H1 (cell line): ENCODE measurements at regions of chr13 and their contacts with region 1.

Region 1: DNA sequence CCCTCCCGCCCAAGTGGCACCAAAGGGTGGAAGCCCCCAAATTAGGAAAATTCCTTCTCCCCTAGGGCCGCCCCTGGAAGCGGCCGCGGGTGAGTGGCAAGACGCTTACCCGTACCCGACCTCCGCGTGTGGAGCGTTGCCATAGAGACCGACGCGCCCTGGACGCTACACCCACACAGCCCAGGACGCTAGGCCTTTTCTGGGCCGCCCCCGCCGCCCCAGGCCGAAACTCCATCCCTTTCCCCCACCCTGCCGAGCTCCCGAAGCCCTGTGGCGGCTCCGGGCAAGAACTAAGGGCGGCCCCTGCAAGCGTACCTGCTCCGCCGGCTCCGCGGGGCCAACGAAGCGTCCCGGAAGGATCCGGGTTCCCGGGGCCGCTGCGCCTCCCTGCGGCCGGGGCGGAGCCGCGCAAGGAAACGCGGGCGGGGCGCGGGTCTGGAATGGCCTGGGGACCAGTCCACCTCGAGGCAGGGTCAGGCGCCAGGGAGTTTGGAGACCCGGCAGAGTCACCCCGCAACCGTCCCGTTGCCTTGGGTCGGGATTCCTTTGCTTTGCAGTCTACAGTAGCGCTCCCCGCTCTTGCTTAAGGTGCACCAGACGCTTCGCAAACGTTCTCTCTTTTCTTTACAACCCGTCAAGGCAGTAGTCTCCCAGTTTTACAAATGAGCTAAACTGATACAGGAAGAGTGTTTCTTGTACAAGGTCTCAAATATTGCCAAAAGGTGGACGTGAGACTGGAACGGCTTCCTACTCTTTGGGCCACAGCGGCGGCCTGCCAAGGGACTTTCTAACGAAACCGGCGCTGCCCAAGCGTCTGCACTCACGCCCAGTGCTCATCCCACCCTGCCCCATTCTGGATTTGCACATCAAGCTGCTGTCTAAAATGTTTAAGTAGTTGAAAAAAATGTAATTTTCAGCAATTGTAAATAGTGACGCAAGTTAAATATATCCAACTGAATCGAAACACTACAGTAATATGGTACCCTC is at the start of gene NEK5:
- DNase-seq: peak; percentile 46 to 93
- H3K4me3 ChIP-seq: peak within 1 kb of the TSS; percentile 46 to 78 (median 70)
- H3K27ac ChIP-seq: no peak within 1 kb of the TSS
- H3K4me1 ChIP-seq: no peaks in the 10 kb centered on the region
- H3K27me3 ChIP-seq: peaks cover 0 to 10% (median 2%) of the 10 kb centered on the region in 4 experiments; a peak in 2 of 7 replicates
- CTCF ChIP-seq: peak; percentile 62 to 86 (median 76)
- EP300 ChIP-seq: no peak
- POLR2A ChIP-seq: no peak
- RAD21 ChIP-seq: peak; percentile 81 to 87
- total RNA-seq, gene NEK5: 0.27 and 0.35 TPM in 2 replicates

Region 2: DNA sequence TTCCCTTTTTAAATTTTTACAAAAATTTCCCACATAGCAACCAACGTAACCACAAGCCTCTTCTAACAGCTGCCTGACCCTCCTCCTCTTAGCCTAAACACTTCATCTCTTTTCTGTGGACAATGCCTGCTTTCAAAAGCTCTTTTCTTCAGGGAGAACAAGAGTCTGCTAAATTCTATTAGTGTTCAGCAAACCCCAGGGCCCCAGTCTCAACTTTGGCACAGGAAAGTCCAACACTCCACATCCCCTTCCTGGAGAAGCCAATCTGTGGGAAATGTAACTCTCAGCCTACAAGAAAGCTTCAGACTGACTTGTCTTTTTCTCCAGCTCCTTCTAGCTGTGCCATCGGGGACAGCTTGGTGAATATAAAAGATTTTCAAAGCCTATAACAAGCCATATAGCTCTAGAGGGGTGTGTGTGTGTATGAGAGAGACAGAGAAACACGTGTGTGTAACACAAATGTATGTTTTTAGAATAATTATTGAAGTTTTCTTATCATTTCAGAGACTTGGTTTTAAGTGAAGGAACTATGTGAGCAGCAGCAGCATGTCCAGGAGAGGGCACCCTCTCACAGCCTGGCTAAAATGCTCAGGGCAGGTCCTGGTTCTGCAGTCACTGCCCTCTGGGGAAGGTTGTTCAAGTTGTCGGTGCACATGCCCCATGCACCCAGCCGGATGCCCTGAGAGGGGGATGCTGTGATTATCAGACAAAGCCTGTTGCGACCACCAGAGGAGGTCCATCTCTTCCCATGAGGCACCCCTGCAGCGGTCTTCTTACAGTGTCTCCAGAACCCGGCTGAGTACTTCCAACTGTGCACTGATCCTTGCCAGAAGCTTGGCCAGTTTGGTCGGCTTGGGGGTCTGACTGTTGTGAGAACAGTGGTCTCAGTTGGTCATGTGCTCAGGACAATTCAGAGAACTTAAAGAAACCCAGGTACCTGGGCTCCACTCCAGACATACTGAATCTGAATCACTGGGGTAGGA is 232.8 kb before region 1 on chr13:
- CTCF ChIA-PET with region 1: interaction called, 78 read pairs
- POLR2A ChIA-PET with region 1: interaction called, 3 read pairs
- DNase-seq: peak; percentile 51 to 69
- H3K4me3 ChIP-seq: no peak overlapping the region
- H3K27ac ChIP-seq: no peak overlapping the region
- H3K4me1 ChIP-seq: 0 out of 7 replicates have a peak, but pooled peaks cover 0 to 4% (median 0%) of the 10 kb centered on the region in 4 experiments
- H3K27me3 ChIP-seq: no peaks in the 10 kb centered on the region
- CTCF ChIP-seq: peak; percentile 86 to 93 (median 88)
- EP300 ChIP-seq: no peak
- POLR2A ChIP-seq: no peak
- RAD21 ChIP-seq: peak; percentile 88 to 92

Region 3: DNA sequence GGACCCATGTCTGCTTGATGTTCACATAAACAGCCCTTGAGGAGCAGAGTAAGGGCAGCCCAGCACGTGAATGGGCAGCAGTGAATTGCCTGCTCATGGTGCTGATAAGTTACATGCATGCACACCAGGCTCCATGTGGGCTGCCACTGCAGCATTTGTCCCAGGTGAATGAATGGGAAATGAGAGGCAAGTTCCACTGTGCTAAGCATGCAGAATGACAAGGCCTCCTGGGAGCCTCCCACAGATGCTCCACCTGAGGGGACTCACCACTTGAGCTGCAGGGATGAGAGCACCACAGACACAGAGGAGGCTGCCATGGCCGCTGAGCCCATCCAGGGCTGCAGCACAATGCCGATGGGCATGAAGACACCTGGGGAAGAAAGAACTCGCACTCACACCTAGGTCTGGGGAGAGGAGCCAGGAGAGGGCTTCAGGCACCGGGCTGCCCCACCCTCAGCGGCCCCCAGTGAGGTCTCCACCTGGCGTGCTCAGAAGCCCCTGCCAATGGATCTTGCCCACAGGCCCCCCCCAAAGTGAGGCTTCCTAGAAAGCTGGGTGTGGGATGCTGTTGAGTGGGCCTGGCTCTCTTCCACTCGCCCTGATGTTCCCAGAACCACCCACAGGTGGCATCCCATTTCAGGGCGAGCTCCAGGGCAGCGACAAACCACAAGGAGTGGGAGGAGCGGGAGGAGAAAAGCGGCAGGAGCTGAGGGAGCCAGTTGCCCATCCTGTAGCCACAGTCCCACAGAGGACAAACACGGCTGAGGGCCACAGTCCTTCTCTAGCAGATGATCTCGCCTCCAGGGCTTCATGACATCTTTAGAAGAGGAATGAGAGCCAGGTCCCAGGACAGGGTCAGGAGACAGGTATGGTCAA is 193.4 kb before region 1 on chr13:
- CTCF ChIA-PET with region 1: interaction called, 44 read pairs
- POLR2A ChIA-PET with region 1: interaction called, 3 read pairs
- DNase-seq: peak in 1 of 2 experiments; percentile 74
- H3K4me3 ChIP-seq: no peak overlapping the region
- H3K27ac ChIP-seq: no peak overlapping the region
- H3K4me1 ChIP-seq: no peaks in the 10 kb centered on the region
- H3K27me3 ChIP-seq: no peaks in the 10 kb centered on the region
- CTCF ChIP-seq: peak; percentile 69 to 74 (median 73)
- EP300 ChIP-seq: no peak
- POLR2A ChIP-seq: no peak
- RAD21 ChIP-seq: peak; percentile 66 to 76

Region 4: GRCh38 chr13:51946163-51946669 is 182.8 kb before region 1 on chr13:
- CTCF ChIA-PET with region 1: no interaction called
- POLR2A ChIA-PET with region 1: no interaction called
- DNase-seq: no peak
- H3K4me3 ChIP-seq: no peak overlapping the region
- H3K27ac ChIP-seq: no peak overlapping the region
- H3K4me1 ChIP-seq: no peaks in the 10 kb centered on the region
- H3K27me3 ChIP-seq: no peaks in the 10 kb centered on the region
- CTCF ChIP-seq: no peak
- EP300 ChIP-seq: no peak
- POLR2A ChIP-seq: no peak
- RAD21 ChIP-seq: no peak

Region 5: GRCh38 chr13:52001120-52001731 is 127.8 kb before region 1 on chr13:
- CTCF ChIA-PET with region 1: interaction called, 107 read pairs
- POLR2A ChIA-PET with region 1: no interaction called
- DNase-seq: no peak
- H3K4me3 ChIP-seq: no peak overlapping the region
- H3K27ac ChIP-seq: no peak overlapping the region
- H3K4me1 ChIP-seq: peaks cover 0 to 19% (median 14%) of the 10 kb centered on the region in 4 experiments; a peak in 4 of 7 replicates
- H3K27me3 ChIP-seq: no peaks in the 10 kb centered on the region; a peak in 1 of 7 replicates
- CTCF ChIP-seq: peak in 2 of 3 experiments; percentile 36 to 60; a peak in 2 of 4 replicates
- EP300 ChIP-seq: no peak
- POLR2A ChIP-seq: no peak
- RAD21 ChIP-seq: peak; percentile 63 to 64

Region 6: DNA sequence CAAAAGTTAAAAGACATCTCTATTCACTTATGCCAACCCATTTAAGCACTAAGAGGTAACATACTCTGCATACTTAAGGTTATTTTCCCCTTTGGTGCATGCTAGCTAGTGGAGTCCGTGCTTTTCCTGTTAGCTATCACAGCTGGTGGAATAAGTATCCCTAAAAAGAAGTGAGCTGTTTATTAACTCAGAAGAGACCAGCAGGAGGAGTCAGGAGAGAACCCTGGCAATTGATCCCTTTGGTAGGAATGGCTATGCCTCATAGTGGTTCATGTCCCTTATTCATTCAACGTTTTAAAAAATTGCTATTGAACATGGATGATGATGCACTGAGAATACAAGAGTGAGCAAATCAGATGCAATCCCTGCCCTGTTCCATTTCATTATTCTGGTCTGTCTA is 12.3 kb after region 1 on chr13:
- CTCF ChIA-PET with region 1: interaction called, 12 read pairs
- POLR2A ChIA-PET with region 1: no interaction called
- DNase-seq: no peak
- H3K4me3 ChIP-seq: no peak overlapping the region
- H3K27ac ChIP-seq: no peak overlapping the region
- H3K4me1 ChIP-seq: no peaks in the 10 kb centered on the region
- H3K27me3 ChIP-seq: no peaks in the 10 kb centered on the region
- CTCF ChIP-seq: no peak
- EP300 ChIP-seq: no peak
- POLR2A ChIP-seq: no peak
- RAD21 ChIP-seq: no peak